ENCODE measurements at regions of chr14 and their contacts with region 1.

Region 1: GRCh38 chr14:67837011-67837624 is 17.5 kb downstream of the RAD51B start:
- DNase-seq: peak; percentile 30 to 72
- H3K4me3 ChIP-seq: no peak overlapping the region
- H3K27ac ChIP-seq: no peak overlapping the region
- H3K4me1 ChIP-seq: no peaks in the 10 kb centered on the region
- H3K27me3 ChIP-seq: no peaks in the 10 kb centered on the region
- CTCF ChIP-seq: peak in 5 of 6 experiments; percentile 24 to 92 (median 67)
- POLR2A ChIP-seq: no peak

Region 2: GRCh38 chr14:68824517-68825347 is 987.6 kb after region 1 on chr14:
- intact Hi-C with region 1: loop called (anchors 10 kb)
- DNase-seq: peak; percentile 89 to 90
- H3K4me3 ChIP-seq: no peak overlapping the region
- H3K27ac ChIP-seq: no peak overlapping the region
- H3K4me1 ChIP-seq: peaks cover 0 to 7% of the 10 kb centered on the region in 2 donors
- H3K27me3 ChIP-seq: no peaks in the 10 kb centered on the region
- CTCF ChIP-seq: peak; percentile 74 to 93 (median 84)
- POLR2A ChIP-seq: no peak